ENCODE measurements at regions of chr6 and their contacts with region 1.

Region 1: GRCh38 chr6:24581084-24581669 is 64.8 kb downstream of the KIAA0319 start:
- DNase-seq: peak; percentile 37 to 85 (median 71)
- ATAC-seq: peak; percentile 84 to 91 (median 90)
- H3K4me3 ChIP-seq: no peak overlapping the region
- H3K4me3 Mint-ChIP-seq: no peak overlapping the region
- H3K27ac ChIP-seq: no peak overlapping the region
- H3K27ac Mint-ChIP-seq: no peak overlapping the region
- H3K4me1 ChIP-seq: no peaks in the 10 kb centered on the region
- H3K4me1 Mint-ChIP-seq: peaks cover 2 to 10% (median 3%) of the 10 kb centered on the region in 3 donors
- H3K27me3 ChIP-seq: no peaks in the 10 kb centered on the region
- H3K27me3 Mint-ChIP-seq: peaks cover 2 to 6% of the 10 kb centered on the region in 2 donors

Region 2: DNA sequence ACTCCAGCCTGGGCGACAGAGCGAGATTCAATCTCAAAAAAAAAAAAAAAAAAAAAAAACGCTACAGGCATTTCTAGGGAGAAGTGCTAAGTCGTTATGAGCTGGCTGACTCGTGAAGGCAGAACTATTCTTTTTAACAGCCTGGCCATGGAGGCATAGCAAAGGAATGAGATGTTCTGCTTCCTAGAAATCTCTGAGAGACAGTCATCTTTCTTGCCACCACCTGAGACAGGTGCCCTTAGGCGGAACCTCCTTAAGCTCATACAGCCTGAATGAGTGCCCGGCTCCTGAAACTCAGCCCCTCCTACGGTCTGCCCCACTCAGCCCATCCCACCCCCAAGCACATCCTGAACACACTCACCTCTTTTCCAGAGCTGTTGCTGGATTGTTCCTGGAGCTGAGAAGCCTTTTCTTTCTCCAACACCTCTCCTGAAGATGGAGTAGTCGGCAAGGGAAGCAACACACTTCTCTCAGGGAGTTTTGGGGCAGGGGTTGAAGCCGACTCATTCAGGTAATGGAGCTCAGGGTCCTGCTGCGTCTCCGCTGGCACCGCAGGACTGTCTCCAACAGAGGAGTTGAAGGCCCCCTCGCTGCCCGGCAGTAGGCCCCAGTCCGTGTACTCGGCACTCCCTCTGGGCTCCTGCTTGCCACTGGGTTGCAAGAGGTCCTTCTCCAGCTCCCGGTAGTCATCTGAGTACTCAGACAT is 14.5 kb after region 1 on chr6:
- CTCF ChIA-PET with region 1: interaction called, 3 to 10 read pairs
- POLR2A ChIA-PET with region 1: interaction called in 1 of 2 experiments, 5 read pairs
- DNase-seq: no peak
- ATAC-seq: no peak
- H3K4me3 ChIP-seq: no peak overlapping the region
- H3K4me3 Mint-ChIP-seq: no peak overlapping the region
- H3K27ac ChIP-seq: no peak overlapping the region
- H3K27ac Mint-ChIP-seq: no peak overlapping the region
- H3K4me1 ChIP-seq: no peaks in the 10 kb centered on the region
- H3K4me1 Mint-ChIP-seq: no peaks in the 10 kb centered on the region
- H3K27me3 ChIP-seq: peaks cover 0 to 18% of the 10 kb centered on the region in 2 experiments
- H3K27me3 Mint-ChIP-seq: peaks cover 3 to 6% of the 10 kb centered on the region in 2 donors

Region 3: DNA sequence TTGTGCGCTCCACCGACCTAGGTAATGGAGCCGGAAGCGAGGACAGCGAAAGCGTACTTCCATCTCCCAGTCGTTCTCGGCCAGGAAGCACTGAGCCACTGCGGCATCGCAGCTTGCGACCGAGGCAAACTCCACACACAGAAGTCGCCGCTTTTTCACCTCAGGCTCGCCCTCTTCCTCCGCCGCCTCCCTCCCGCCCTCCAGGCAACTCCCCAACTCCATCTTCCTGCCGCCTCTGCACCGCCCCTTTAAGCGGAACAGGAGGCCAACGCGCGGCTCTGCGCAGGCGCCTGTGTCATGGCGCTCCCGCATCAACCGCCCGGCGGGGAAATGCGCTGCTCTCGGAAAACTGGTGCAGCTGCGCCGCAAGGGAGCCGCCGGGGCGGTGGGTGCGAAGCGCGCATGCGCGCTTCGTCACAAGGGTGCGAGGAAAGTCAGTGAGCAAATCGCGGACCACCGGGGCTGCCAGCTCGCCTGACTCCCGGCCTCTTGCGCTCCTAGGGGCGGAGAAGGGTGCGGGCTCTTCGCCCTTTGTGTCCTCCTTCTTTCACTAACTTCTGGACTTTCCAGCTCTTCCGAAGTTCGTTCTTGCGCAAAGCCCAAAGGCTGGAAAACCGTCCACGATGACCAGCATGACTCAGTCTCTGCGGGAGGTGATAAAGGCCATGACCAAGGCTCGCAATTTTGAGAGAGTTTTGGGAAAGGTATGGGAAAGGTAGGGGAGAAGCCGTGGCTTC is 85.6 kb after region 1 on chr6 and contains the starts of genes ACOT13 and TDP2:
- CTCF ChIA-PET with region 1: interaction called, 5 to 10 read pairs
- POLR2A ChIA-PET with region 1: interaction called in 1 of 2 experiments, 4 read pairs
- DNase-seq: peak; percentile 91 to 98 (median 95)
- ATAC-seq: peak; percentile 93 to 96 (median 94)
- H3K4me3 ChIP-seq: peak within 1 kb of the TSS; percentile 78 to 89
- H3K4me3 Mint-ChIP-seq: peak within 1 kb of the TSS; percentile 99 to 100 (median 100)
- H3K27ac ChIP-seq: peak within 1 kb of the TSS; percentile 79
- H3K27ac Mint-ChIP-seq: peak within 1 kb of the TSS; percentile 97
- H3K4me1 ChIP-seq: peaks cover 20 to 24% of the 10 kb centered on the region in 2 experiments
- H3K4me1 Mint-ChIP-seq: peaks cover 68 to 70% (median 68%) of the 10 kb centered on the region in 3 donors
- H3K27me3 ChIP-seq: no peaks in the 10 kb centered on the region
- H3K27me3 Mint-ChIP-seq: no peaks in the 10 kb centered on the region
- total RNA-seq, gene ACOT13: 4.2 to 10.9 (median 9.5) TPM
- total RNA-seq, gene TDP2: 45.7 to 56.5 (median 50.8) TPM

Region 4: GRCh38 chr6:24692848-24693592 is 111.8 kb after region 1 on chr6:
- CTCF ChIA-PET with region 1: interaction called, 15 to 23 read pairs
- POLR2A ChIA-PET with region 1: no interaction called
- DNase-seq: peak in 1 of 35 experiments; percentile 3
- ATAC-seq: peak; percentile 34 to 72 (median 68)
- H3K4me3 ChIP-seq: no peak overlapping the region
- H3K4me3 Mint-ChIP-seq: no peak overlapping the region
- H3K27ac ChIP-seq: no peak overlapping the region
- H3K27ac Mint-ChIP-seq: no peak overlapping the region
- H3K4me1 ChIP-seq: peaks cover 0 to 2% of the 10 kb centered on the region in 2 experiments
- H3K4me1 Mint-ChIP-seq: peaks cover 11 to 21% (median 16%) of the 10 kb centered on the region in 3 donors
- H3K27me3 ChIP-seq: no peaks in the 10 kb centered on the region
- H3K27me3 Mint-ChIP-seq: no peaks in the 10 kb centered on the region

Measured in T-cell (primary cell).